ENCODE measurements at regions of chr16 and their contacts with region 1.

Region 1: GRCh38 chr16:23877107-23878090 is 41.6 kb downstream of the PRKCB start:
- DNase-seq: peak; percentile 56 to 69 (median 68)
- H3K4me3 ChIP-seq: no peak overlapping the region
- H3K27ac ChIP-seq: no peak overlapping the region
- H3K4me1 ChIP-seq: peaks cover 36 to 78% (median 61%) of the 10 kb centered on the region in 4 experiments
- H3K27me3 ChIP-seq: no peaks in the 10 kb centered on the region

Region 2: GRCh38 chr16:23768586-23768985 is 108.8 kb before region 1 on chr16:
- CTCF ChIA-PET with region 1: no interaction called
- POLR2A ChIA-PET with region 1: no interaction called
- DNase-seq: no peak
- H3K4me3 ChIP-seq: no peak overlapping the region
- H3K27ac ChIP-seq: no peak overlapping the region
- H3K4me1 ChIP-seq: no peaks in the 10 kb centered on the region
- H3K27me3 ChIP-seq: peaks cover 0 to 4% (median 0%) of the 10 kb centered on the region in 5 experiments

Region 3: GRCh38 chr16:23803591-23804123 is 73.7 kb before region 1 on chr16:
- CTCF ChIA-PET with region 1: interaction called, 15 read pairs
- POLR2A ChIA-PET with region 1: no interaction called
- DNase-seq: peak; percentile 64 to 66 (median 66)
- H3K4me3 ChIP-seq: peak overlapping the region in 3 of 7 experiments; percentile 9 to 58 (median 42)
- H3K27ac ChIP-seq: no peak overlapping the region
- H3K4me1 ChIP-seq: peaks cover 2 to 24% (median 10%) of the 10 kb centered on the region in 4 experiments
- H3K27me3 ChIP-seq: no peaks in the 10 kb centered on the region

Region 4: DNA sequence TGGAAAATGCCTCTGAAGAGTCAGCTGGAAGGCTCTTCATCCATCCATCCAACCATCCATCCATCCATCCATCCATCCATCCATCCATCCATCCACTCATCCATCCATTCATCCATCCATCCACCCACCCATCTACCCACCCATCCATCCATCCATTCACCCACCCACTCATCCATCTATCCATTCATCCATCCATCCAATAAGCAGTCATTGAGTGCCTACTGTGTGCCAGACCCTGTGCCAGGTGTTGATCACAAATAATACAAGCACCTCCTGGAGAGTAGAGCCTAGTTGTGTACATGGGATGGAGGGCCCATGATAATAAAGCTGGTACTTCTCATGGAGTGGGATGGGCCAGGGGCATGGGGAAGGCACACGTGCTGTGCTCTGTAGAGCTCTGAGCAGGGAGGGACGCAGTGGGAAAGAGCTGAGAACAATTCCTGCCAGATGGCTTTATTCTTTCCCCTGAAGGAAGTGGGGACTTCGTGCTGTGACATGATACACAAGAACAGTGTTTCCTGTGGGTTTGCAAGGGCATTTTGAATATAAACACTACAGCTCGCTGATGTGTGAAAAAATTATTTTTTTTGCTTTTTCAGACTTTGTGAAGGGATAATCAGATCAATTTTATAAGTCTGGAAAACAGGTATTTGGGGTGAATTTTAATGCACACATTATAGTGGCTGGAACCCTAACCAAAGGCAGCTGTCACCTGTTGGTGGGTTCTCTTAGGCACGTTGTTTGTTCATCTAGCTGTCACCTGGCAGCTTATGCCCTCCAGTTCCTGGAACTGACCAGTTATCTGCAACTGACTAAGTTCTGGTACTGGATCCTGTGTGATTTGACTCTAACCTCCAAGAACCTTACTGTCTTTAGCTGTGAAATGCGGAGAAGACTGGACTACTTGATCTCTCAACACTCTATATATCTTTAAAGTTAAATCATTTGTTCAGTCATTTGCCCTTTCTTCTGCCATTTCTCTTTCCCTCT is 19.7 kb after region 1 on chr16:
- CTCF ChIA-PET with region 1: interaction called, 47 read pairs
- POLR2A ChIA-PET with region 1: interaction called, 4 read pairs
- DNase-seq: peak; percentile 73 to 92 (median 85)
- H3K4me3 ChIP-seq: peak overlapping the region in 5 of 7 experiments; percentile 4 to 63 (median 23)
- H3K27ac ChIP-seq: peak overlapping the region; percentile 42 to 77
- H3K4me1 ChIP-seq: peaks cover 41 to 72% (median 63%) of the 10 kb centered on the region in 4 experiments
- H3K27me3 ChIP-seq: no peaks in the 10 kb centered on the region

Region 5: DNA sequence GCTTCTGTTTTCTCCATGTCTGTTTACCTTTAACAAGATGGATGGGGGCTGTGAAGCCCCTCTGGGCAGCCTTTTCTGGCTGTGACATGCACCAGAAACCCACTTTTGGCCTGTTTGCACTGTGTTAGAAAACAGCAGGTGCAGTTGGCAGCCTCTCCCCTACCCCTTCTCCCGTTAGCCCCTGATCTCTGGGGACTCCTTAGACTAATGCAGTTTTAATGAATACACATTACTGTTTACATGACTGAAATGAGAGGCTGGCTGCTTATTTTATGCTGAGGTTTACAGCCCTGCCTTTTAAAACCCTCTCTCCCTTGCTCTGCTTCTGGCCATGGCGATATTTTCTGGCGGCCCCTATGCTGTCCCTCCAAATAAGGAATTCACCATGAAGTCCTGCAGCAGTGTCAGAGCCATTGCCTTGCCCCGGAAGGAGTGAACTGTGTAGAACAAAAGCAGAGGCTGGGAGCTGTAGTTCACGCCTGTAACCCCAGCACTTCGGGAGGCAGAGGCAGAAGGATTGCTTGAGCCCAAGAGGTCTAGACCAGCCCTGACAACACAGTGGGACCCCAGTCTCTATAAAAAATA is 37.6 kb after region 1 on chr16:
- CTCF ChIA-PET with region 1: interaction called, 12 read pairs
- POLR2A ChIA-PET with region 1: no interaction called
- DNase-seq: no peak
- H3K4me3 ChIP-seq: no peak overlapping the region
- H3K27ac ChIP-seq: no peak overlapping the region
- H3K4me1 ChIP-seq: peaks cover 5 to 44% (median 34%) of the 10 kb centered on the region in 4 experiments
- H3K27me3 ChIP-seq: no peaks in the 10 kb centered on the region

Region 6: DNA sequence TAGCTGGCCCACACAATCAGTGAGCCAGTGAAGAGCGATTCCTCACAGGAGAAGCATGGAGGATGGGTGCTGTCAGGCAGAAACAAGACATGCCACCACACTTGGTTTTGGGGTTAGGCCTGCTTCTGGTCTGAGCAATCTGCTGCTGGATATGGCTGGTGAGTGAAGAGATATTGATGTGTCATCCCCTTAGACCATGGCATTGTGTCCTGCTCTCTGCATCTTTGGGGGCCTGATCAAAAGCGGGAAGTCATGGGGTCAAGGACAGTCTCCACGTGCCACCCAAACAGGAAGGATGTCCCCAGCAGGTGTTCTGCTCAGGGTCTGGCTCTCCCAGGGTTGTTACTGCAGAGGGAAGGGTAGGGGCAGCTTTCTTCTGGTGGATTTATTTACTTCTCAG is 99.1 kb after region 1 on chr16:
- CTCF ChIA-PET with region 1: interaction called, 10 read pairs
- POLR2A ChIA-PET with region 1: no interaction called
- DNase-seq: peak; percentile 30 to 94 (median 91)
- H3K4me3 ChIP-seq: peak overlapping the region in 1 of 7 experiments; percentile 33
- H3K27ac ChIP-seq: peak overlapping the region; percentile 25 to 46
- H3K4me1 ChIP-seq: peaks cover 4 to 31% (median 24%) of the 10 kb centered on the region in 4 experiments
- H3K27me3 ChIP-seq: no peaks in the 10 kb centered on the region

Region 7: GRCh38 chr16:24036614-24037013 is 159.2 kb after region 1 on chr16:
- CTCF ChIA-PET with region 1: interaction called, 67 read pairs
- POLR2A ChIA-PET with region 1: interaction called, 4 read pairs
- DNase-seq: peak; percentile 39 to 56 (median 52)
- H3K4me3 ChIP-seq: no peak overlapping the region
- H3K27ac ChIP-seq: no peak overlapping the region
- H3K4me1 ChIP-seq: peaks cover 4 to 31% (median 25%) of the 10 kb centered on the region in 4 experiments
- H3K27me3 ChIP-seq: no peaks in the 10 kb centered on the region